CD4-positive, alpha-beta memory T cell (primary cell): ENCODE measurements at regions of chr11 and their contacts with region 1.

Region 1: GRCh38 chr11:129992161-129992944 is 10.3 kb downstream of the PRDM10 start:
- DNase-seq: peak; percentile 20 to 53 (median 27)
- H3K4me3 ChIP-seq: no peak overlapping the region
- H3K4me3 Mint-ChIP-seq: no peak overlapping the region
- H3K27ac ChIP-seq: no peak overlapping the region
- H3K27ac Mint-ChIP-seq: peak overlapping the region in 2 of 7 donors; percentile 27 to 52
- H3K4me1 ChIP-seq: no peaks in the 10 kb centered on the region
- H3K4me1 Mint-ChIP-seq: peaks cover 7 to 15% (median 12%) of the 10 kb centered on the region in 4 donors
- H3K27me3 ChIP-seq: no peaks in the 10 kb centered on the region
- H3K27me3 Mint-ChIP-seq: no peaks in the 10 kb centered on the region

Region 2: DNA sequence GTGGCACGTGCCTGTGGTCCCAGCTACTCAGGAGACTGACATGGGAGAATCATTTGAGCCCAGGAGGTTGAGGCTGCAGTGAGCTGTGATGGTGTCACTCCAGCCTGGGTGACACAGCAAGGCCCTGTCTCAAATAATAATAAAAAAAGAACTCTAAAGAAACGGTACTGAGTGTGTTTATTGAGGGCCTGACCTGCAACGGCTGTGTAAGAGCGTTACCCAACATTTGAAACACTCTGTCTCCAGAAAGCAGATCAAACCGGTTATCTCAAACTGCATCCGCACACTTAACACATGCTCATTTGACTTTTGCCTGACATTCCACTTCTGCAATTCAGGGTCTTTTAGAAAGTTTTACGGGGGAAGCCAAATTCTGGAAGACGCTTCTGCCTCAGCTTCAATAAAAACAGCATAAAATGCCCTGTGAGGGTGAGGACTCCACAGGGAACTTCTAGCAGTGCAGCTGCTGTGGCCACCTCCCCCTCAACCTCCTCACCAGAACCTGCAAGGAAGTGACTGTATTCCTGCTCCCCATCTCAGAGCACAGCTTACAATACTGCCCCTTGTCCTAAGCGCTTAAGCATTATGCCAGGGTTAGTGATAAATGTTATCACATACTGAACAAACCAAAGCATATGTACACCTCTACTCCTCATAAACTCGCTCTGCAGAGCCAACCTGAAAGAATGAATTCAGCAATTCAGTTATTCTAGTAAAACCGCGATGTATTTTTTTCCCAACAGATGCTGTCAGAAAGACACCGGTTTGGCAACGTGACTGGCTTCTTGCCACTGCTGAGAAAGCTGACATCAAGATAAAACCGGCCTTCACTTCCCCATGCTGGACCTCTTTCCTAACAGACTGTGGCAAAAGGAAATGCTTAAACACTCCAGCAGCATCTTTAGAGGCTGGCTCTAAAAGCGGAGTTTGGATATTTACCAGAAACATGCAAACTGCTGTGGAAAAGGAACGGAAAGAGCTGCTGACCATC is 42.0 kb before region 1 on chr11:
- CTCF ChIA-PET with region 1: no interaction called
- POLR2A ChIA-PET with region 1: no interaction called
- intact Hi-C with region 1: no loop called
- DNase-seq: no peak
- H3K4me3 ChIP-seq: no peak overlapping the region
- H3K4me3 Mint-ChIP-seq: no peak overlapping the region
- H3K27ac ChIP-seq: no peak overlapping the region
- H3K27ac Mint-ChIP-seq: no peak overlapping the region
- H3K4me1 ChIP-seq: no peaks in the 10 kb centered on the region
- H3K4me1 Mint-ChIP-seq: no peaks in the 10 kb centered on the region
- H3K27me3 ChIP-seq: no peaks in the 10 kb centered on the region
- H3K27me3 Mint-ChIP-seq: no peaks in the 10 kb centered on the region

Region 3: DNA sequence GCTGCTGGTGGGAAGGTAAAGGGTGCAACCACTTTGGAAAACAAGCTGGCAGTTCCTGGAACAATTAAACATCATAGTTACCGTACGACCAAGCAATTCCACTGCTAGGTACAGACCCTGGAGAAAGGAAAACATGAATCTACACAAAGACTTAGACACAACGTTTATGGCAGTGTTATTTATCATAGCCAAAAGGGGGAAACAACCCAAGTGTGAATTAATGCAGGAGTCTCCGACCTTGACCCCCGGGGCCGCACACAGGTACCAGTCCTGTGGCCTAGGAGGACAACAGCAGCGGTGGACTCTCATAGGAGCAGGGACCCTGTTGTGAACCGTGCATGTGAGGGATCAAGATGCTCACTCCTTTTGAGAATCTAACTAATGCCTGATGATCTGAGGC is 12.3 kb before region 1 on chr11:
- CTCF ChIA-PET with region 1: interaction called, 14 read pairs
- POLR2A ChIA-PET with region 1: no interaction called
- intact Hi-C with region 1: no loop called
- DNase-seq: no peak
- H3K4me3 ChIP-seq: no peak overlapping the region
- H3K4me3 Mint-ChIP-seq: no peak overlapping the region
- H3K27ac ChIP-seq: no peak overlapping the region
- H3K27ac Mint-ChIP-seq: no peak overlapping the region
- H3K4me1 ChIP-seq: no peaks in the 10 kb centered on the region
- H3K4me1 Mint-ChIP-seq: peaks cover 0 to 15% (median 6%) of the 10 kb centered on the region in 4 donors
- H3K27me3 ChIP-seq: no peaks in the 10 kb centered on the region
- H3K27me3 Mint-ChIP-seq: no peaks in the 10 kb centered on the region

Region 4: DNA sequence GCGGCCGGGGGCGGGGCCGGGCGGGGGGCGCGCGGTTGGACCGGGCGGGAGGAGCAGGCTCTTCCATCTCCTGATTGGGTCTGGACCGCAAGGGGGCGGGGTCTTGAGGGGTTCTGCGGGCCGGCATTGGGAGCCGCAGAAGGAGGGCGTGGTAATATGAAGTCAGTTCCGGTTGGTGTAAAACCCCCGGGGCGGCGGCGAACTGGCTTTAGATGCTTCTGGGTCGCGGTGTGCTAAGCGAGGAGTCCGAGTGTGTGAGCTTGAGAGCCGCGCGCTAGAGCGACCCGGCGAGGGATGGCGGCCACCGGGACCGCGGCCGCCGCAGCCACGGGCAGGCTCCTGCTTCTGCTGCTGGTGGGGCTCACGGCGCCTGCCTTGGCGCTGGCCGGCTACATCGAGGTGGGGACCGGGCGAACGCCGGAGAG is 77.3 kb after region 1 on chr11 and contains the start of gene APLP2:
- CTCF ChIA-PET with region 1: interaction called, 12 read pairs
- POLR2A ChIA-PET with region 1: interaction called, 3 read pairs
- intact Hi-C with region 1: no loop called
- DNase-seq: peak; percentile 96 to 99 (median 96)
- H3K4me3 ChIP-seq: peak within 1 kb of the TSS; percentile 65 to 89
- H3K4me3 Mint-ChIP-seq: peak within 1 kb of the TSS; percentile 93 to 99 (median 98)
- H3K27ac ChIP-seq: peak within 1 kb of the TSS; percentile 74
- H3K27ac Mint-ChIP-seq: peak within 1 kb of the TSS; percentile 94 to 98 (median 97)
- H3K4me1 ChIP-seq: peaks cover 17% of the 10 kb centered on the region
- H3K4me1 Mint-ChIP-seq: peaks cover 16 to 33% (median 20%) of the 10 kb centered on the region in 4 donors
- H3K27me3 ChIP-seq: no peaks in the 10 kb centered on the region
- H3K27me3 Mint-ChIP-seq: no peaks in the 10 kb centered on the region
- total RNA-seq, gene APLP2: 58.7 to 65.3 TPM